ENCODE measurements at regions of chr2 and their contacts with region 1.

Region 1: GRCh38 chr2:234425619-234426603 is 71.0 kb downstream of the ARL4C start:
- DNase-seq: peak; percentile 47 to 91 (median 85)
- ATAC-seq: peak; percentile 75 to 78
- H3K4me3 Mint-ChIP-seq: peak overlapping the region; percentile 59 to 88 (median 80)
- H3K27ac Mint-ChIP-seq: peak overlapping the region; percentile 96 to 100 (median 100)
- H3K4me1 Mint-ChIP-seq: peaks cover 42 to 95% (median 90%) of the 10 kb centered on the region in 4 donors
- H3K27me3 Mint-ChIP-seq: no peaks in the 10 kb centered on the region

Region 2: DNA sequence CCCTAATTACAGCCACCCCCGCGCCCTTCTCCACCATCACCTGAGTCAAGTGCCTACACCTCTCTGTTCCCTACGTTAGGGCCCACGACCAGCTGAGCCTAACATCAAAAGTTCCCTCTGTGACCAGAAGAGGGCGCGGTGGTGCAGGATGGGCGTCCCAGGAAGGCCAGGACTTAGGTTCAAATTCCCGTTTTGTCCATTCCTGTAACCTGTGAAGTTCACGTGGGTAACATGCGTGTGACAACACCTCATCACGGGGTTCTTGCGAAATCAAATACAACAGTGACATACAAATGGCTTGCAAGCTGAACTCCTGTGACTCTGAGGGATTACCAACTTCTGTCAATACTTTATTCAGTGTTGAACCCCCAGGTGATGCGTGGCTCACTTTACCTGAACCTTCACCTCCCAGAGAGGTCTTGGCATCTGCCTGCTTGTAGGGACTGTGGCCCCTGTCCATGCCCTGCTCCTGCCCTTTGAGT is 136.9 kb before region 1 on chr2:
- POLR2A ChIA-PET with region 1: interaction called, 94 read pairs
- DNase-seq: peak; percentile 37 to 83 (median 64)
- ATAC-seq: no peak
- H3K4me3 Mint-ChIP-seq: peak overlapping the region in 9 of 10 donors; percentile 2 to 61 (median 32)
- H3K27ac Mint-ChIP-seq: peak overlapping the region; percentile 94 to 100 (median 99)
- H3K4me1 Mint-ChIP-seq: peaks cover 32 to 71% (median 61%) of the 10 kb centered on the region in 4 donors
- H3K27me3 Mint-ChIP-seq: no peaks in the 10 kb centered on the region

Region 3: DNA sequence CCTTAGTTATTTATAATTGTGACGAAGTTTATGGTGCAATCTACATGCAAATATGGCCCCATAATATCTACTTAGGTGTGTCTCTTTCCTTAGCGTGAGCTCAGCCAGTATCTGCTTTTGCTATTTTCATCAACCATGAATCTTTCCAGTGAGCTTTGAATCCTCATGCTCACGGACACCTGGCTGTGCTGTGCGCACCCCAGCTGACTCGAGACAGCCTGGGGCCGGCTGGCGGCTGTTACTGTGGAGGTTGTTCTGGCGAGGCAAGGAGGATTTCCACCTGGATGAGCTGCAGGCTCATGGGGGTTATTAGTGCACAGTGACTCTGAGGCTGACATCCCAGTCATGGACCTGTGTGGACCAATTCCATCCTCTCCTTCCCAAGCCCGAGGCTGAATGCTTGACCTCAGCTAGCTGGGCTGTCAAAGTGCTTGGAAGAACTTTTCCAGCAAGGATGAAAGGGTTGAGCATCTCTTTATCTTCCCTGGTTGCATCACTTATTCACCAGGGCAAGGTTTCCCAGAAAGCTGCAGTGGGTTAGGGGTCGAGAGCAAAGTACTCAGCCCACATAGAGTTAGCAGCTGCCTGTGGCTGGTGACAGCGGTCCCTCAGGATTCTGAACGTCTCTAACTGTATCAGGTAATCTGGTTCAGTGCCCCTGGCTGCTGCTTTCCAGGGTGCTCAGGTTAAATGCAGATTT is 70.7 kb before region 1 on chr2:
- POLR2A ChIA-PET with region 1: no interaction called
- DNase-seq: no peak
- ATAC-seq: no peak
- H3K4me3 Mint-ChIP-seq: no peak overlapping the region
- H3K27ac Mint-ChIP-seq: peak overlapping the region in 3 of 10 donors; percentile 43 to 79 (median 55)
- H3K4me1 Mint-ChIP-seq: peaks cover 6 to 27% (median 17%) of the 10 kb centered on the region in 4 donors
- H3K27me3 Mint-ChIP-seq: no peaks in the 10 kb centered on the region

Region 4: GRCh38 chr2:234374736-234375135 is 51.2 kb before region 1 on chr2:
- POLR2A ChIA-PET with region 1: interaction called, 20 read pairs
- DNase-seq: no peak
- ATAC-seq: no peak
- H3K4me3 Mint-ChIP-seq: no peak overlapping the region
- H3K27ac Mint-ChIP-seq: peak overlapping the region in 6 of 10 donors; percentile 47 to 96 (median 84)
- H3K4me1 Mint-ChIP-seq: peaks cover 27 to 54% (median 52%) of the 10 kb centered on the region in 4 donors
- H3K27me3 Mint-ChIP-seq: no peaks in the 10 kb centered on the region

Region 5: DNA sequence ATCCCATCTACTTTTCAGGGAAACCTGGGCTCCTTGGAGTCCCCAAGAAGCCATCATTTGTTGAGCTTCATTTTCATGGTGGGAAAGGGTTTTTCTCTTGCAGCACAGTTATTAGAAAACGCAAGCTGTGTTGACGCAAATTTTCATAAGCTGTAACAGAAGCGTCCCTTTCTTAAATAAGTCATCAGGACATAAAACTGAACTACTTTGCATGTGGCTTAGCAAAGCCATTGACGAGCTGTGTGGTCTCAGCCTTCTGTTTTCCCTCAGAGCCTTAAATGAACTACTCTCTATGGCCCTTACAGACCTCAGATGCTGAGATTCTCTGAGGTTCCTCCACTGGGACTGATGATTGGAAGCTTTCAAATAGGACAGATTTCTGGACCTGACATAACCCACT is 14.1 kb before region 1 on chr2:
- POLR2A ChIA-PET with region 1: interaction called, 11 read pairs
- DNase-seq: no peak
- ATAC-seq: no peak
- H3K4me3 Mint-ChIP-seq: no peak overlapping the region
- H3K27ac Mint-ChIP-seq: peak overlapping the region in 3 of 10 donors; percentile 2 to 58 (median 34)
- H3K4me1 Mint-ChIP-seq: peaks cover 23 to 42% (median 34%) of the 10 kb centered on the region in 4 donors
- H3K27me3 Mint-ChIP-seq: no peaks in the 10 kb centered on the region

Region 6: DNA sequence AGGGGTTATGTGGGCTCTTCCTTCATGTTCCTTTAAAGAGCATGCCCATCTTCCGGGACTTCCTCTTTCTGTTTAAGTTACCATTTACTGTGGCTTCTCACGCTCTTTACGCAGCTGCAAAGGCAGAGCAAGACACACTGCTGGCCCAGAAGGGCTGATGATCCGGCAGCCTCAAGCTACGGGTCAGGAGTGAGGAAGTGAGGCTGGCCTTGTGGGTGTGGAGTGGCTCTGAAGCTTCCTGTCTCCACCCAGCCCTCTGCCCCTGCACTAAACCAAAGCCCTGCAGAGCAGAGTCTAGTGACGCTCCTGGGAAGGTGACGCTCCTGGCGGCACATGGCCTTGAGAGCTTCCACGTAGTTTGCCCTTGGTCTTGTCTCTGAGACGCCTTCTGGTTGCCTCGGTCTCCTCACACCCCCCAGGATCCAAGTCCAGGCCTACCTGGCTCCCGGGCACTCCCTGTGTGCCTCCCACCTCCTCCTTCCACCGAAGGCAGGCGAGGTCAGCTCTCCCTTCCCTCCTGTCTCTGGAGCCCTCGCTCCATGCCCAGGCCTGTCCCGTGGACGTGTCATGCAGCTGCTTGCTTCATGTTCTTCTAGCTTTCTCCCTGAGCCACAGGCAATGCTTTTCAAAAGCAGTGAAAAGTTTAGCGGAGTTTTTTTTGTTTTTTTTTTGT is 20.6 kb after region 1 on chr2:
- POLR2A ChIA-PET with region 1: interaction called, 593 read pairs
- DNase-seq: peak; percentile 36 to 91 (median 84)
- ATAC-seq: peak; percentile 65 to 87
- H3K4me3 Mint-ChIP-seq: peak overlapping the region; percentile 38 to 89 (median 80)
- H3K27ac Mint-ChIP-seq: peak overlapping the region; percentile 95 to 100 (median 99)
- H3K4me1 Mint-ChIP-seq: peaks cover 48 to 95% (median 90%) of the 10 kb centered on the region in 4 donors
- H3K27me3 Mint-ChIP-seq: no peaks in the 10 kb centered on the region

Region 7: GRCh38 chr2:234483568-234484251 is 57.8 kb after region 1 on chr2:
- POLR2A ChIA-PET with region 1: interaction called, 32 read pairs
- DNase-seq: peak; percentile 59 to 94 (median 86)
- ATAC-seq: peak; percentile 74 to 79
- H3K4me3 Mint-ChIP-seq: peak overlapping the region; percentile 41 to 84 (median 79)
- H3K27ac Mint-ChIP-seq: peak overlapping the region; percentile 89 to 99 (median 97)
- H3K4me1 Mint-ChIP-seq: peaks cover 24 to 92% (median 73%) of the 10 kb centered on the region in 4 donors
- H3K27me3 Mint-ChIP-seq: no peaks in the 10 kb centered on the region

Region 8: GRCh38 chr2:234496835-234497591 is 71.1 kb after region 1 on chr2 and contains the start of gene ARL4C:
- POLR2A ChIA-PET with region 1: interaction called, 191 read pairs
- DNase-seq: peak; percentile 60 to 82 (median 72)
- ATAC-seq: peak; percentile 36 to 45
- H3K4me3 Mint-ChIP-seq: peak within 1 kb of the TSS; percentile 88 to 100 (median 98)
- H3K27ac Mint-ChIP-seq: peak within 1 kb of the TSS; percentile 96 to 99 (median 98)
- H3K4me1 Mint-ChIP-seq: peaks cover 36 to 50% (median 43%) of the 10 kb centered on the region in 4 donors
- H3K27me3 Mint-ChIP-seq: peaks cover 0 to 1% (median 0%) of the 10 kb centered on the region in 5 donors
- polyA plus RNA-seq, gene ARL4C: 52.9 to 140 (median 112) TPM

Region 9: DNA sequence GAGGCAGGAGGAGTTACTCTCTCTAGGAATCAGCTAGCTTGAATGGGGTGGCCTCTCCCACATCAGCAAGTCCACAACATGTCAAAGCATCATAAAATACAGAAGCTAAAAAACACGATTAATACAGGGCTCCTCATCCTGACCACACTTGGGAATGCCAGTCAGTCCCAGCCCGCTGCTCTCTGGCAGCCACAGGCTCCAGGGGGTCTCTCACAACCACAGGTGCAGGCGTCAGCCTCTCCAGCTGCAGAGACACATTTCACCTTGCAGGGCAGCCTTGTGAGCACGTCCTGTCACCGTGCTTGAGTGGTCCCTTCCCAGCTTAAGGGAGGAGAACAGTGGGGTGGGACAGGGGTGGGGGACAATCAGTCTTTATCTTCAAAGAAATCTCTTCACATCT is 388.5 kb after region 1 on chr2:
- POLR2A ChIA-PET with region 1: no interaction called
- DNase-seq: no peak
- ATAC-seq: no peak
- H3K4me3 Mint-ChIP-seq: no peak overlapping the region
- H3K27ac Mint-ChIP-seq: no peak overlapping the region
- H3K4me1 Mint-ChIP-seq: no peaks in the 10 kb centered on the region
- H3K27me3 Mint-ChIP-seq: peaks cover 5 to 40% (median 19%) of the 10 kb centered on the region in 5 donors

Measured in naive thymus-derived CD8-positive, alpha-beta T cell (primary cell).